ENCODE measurements at regions of chr22 and their contacts with region 1.

Region 1: GRCh38 chr22:39003165-39003638 is 10.9 kb upstream of the APOBEC3C start:
- DNase-seq: peak; percentile 90
- ATAC-seq: peak; percentile 99
- H3K4me3 ChIP-seq: no peak overlapping the region
- H3K27ac ChIP-seq: peak overlapping the region; percentile 36
- H3K4me1 ChIP-seq: peaks cover 5% of the 10 kb centered on the region
- H3K27me3 ChIP-seq: no peaks in the 10 kb centered on the region
- CTCF ChIP-seq: peak; percentile 70

Region 2: GRCh38 chr22:38766076-38766777 is 237.0 kb before region 1 on chr22:
- CTCF ChIA-PET with region 1: interaction called, 5 read pairs
- POLR2A ChIA-PET with region 1: interaction called, 7 read pairs
- intact Hi-C with region 1: loop called (anchors 5 kb)
- DNase-seq: peak; percentile 82
- ATAC-seq: peak; percentile 81
- H3K4me3 ChIP-seq: no peak overlapping the region
- H3K27ac ChIP-seq: no peak overlapping the region
- H3K4me1 ChIP-seq: peaks cover 11% of the 10 kb centered on the region
- H3K27me3 ChIP-seq: no peaks in the 10 kb centered on the region
- CTCF ChIP-seq: peak; percentile 88

Region 3: DNA sequence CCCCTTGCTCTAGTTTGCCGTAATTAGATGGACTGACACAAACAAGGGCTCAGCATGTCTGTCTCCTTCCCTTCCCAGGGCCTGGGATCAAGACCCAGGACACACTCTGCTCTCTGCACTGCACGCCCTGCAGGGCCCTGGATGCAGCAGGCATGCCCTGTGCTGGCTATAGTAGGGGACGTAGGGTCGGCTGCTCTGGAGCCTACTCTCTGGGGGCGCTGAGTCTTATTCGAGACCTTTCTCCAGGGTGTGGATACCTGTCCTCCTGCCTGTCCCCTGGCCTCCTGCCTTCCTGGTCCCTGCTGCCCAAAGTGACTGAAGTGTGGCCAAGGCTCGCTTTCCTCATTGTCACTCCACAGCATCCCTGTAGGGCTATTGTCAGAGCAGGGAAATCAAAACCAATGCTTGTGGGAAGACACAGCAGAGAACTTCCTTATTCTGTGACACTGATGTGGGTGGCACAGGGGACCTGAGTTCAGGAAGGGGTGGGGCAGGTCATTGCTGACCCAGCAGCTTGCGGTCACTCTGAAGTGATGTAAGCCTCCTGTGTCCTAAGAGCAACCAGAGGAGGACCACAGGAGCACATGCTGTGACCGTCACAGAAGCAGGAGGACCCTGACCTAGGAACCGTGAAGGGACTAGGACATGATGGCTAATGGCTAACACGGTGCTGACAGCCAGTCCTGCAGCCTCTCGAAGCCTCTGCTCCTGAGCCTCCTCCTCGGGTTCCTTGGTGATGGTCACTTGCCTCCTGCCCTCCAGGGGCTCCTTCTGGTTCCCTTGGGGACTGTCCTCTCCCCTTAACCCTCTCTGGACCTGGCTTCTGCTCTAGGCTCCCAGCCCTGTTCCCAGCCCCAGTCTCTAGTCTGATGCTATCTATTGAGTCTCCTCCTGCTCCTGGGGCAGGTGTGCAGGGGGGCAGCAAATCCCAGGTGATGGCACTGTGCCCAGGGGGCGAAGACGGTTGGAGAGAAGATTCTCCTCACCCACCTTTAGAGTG is 35.5 kb before region 1 on chr22:
- CTCF ChIA-PET with region 1: no interaction called
- POLR2A ChIA-PET with region 1: no interaction called
- intact Hi-C with region 1: no loop called
- DNase-seq: no peak
- ATAC-seq: no peak
- H3K4me3 ChIP-seq: no peak overlapping the region
- H3K27ac ChIP-seq: no peak overlapping the region
- H3K4me1 ChIP-seq: no peaks in the 10 kb centered on the region
- H3K27me3 ChIP-seq: no peaks in the 10 kb centered on the region
- CTCF ChIP-seq: no peak

Region 4: DNA sequence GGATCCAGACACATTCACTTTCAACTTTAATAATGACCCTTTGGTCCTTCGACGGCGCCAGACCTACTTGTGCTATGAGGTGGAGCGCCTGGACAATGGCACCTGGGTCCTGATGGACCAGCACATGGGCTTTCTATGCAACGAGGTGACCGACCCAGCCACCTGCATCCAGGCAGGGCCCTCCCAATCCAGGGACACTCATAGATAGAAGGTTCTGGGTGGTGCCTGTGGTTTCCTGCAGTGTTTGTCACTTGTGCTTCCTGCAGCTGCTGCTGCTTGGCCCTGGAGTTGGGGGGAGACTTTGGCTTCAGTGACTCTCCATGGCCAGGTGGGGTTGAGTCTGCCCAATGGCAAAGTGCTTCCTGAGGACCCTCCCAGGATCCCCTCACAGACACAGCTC is 13.7 kb before region 1 on chr22:
- CTCF ChIA-PET with region 1: no interaction called
- POLR2A ChIA-PET with region 1: no interaction called
- intact Hi-C with region 1: no loop called
- DNase-seq: no peak
- ATAC-seq: no peak
- H3K4me3 ChIP-seq: no peak overlapping the region
- H3K27ac ChIP-seq: no peak overlapping the region
- H3K4me1 ChIP-seq: peaks cover 8% of the 10 kb centered on the region
- H3K27me3 ChIP-seq: no peaks in the 10 kb centered on the region
- CTCF ChIP-seq: no peak

Region 5: GRCh38 chr22:39013942-39014722 is 10.9 kb after region 1 on chr22 and contains the start of gene APOBEC3C:
- CTCF ChIA-PET with region 1: no interaction called
- POLR2A ChIA-PET with region 1: no interaction called
- intact Hi-C with region 1: no loop called
- DNase-seq: peak; percentile 85
- ATAC-seq: peak; percentile 92
- H3K4me3 ChIP-seq: peak within 1 kb of the TSS; percentile 91
- H3K27ac ChIP-seq: peak within 1 kb of the TSS; percentile 72
- H3K4me1 ChIP-seq: peaks cover 7% of the 10 kb centered on the region; the same call in 1 of the 2 replicates
- H3K27me3 ChIP-seq: no peaks in the 10 kb centered on the region
- CTCF ChIP-seq: peak; percentile 18; the same call in 1 of the 2 replicates
- total RNA-seq, gene APOBEC3C: 35.5 and 37.8 TPM in 2 replicates

Region 6: DNA sequence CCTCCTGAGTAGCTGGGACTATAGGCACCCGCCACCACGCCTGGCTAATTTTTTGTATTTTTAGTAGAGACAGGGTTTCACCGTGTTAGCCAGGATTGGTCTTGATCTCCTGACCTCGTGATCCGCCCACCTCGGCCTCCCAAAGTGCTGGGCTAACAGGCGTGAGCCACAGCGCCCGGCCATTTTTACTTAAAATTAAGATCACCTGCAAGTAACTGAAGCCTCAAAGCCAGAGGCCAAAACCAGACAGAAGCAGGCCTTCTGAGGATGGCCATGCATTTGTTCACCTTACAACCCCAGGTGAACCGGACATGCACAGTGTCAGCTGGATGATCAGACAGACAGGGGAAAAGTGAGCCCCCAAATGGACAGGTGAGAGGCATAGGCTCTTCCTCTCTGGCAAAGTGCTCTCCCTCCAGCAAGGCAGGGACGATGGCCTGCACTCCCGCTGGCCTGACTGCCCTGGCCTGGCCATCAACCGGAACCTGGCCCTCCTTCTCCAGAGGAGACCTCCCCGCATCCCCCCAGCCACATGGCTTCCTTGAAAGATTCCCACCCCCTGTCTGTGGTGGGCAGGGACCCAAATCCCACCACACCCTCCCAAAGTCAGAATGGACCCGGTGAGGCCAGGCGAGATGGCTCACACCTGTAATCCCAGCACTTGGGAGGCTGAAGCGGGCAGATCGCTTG is 119.7 kb after region 1 on chr22:
- CTCF ChIA-PET with region 1: interaction called, 10 read pairs
- POLR2A ChIA-PET with region 1: no interaction called
- intact Hi-C with region 1: loop called (anchors 1 kb)
- DNase-seq: no peak
- ATAC-seq: no peak
- H3K4me3 ChIP-seq: no peak overlapping the region
- H3K27ac ChIP-seq: no peak overlapping the region
- H3K4me1 ChIP-seq: no peaks in the 10 kb centered on the region; the same call in 1 of the 2 replicates
- H3K27me3 ChIP-seq: no peaks in the 10 kb centered on the region
- CTCF ChIP-seq: no peak

Region 7: DNA sequence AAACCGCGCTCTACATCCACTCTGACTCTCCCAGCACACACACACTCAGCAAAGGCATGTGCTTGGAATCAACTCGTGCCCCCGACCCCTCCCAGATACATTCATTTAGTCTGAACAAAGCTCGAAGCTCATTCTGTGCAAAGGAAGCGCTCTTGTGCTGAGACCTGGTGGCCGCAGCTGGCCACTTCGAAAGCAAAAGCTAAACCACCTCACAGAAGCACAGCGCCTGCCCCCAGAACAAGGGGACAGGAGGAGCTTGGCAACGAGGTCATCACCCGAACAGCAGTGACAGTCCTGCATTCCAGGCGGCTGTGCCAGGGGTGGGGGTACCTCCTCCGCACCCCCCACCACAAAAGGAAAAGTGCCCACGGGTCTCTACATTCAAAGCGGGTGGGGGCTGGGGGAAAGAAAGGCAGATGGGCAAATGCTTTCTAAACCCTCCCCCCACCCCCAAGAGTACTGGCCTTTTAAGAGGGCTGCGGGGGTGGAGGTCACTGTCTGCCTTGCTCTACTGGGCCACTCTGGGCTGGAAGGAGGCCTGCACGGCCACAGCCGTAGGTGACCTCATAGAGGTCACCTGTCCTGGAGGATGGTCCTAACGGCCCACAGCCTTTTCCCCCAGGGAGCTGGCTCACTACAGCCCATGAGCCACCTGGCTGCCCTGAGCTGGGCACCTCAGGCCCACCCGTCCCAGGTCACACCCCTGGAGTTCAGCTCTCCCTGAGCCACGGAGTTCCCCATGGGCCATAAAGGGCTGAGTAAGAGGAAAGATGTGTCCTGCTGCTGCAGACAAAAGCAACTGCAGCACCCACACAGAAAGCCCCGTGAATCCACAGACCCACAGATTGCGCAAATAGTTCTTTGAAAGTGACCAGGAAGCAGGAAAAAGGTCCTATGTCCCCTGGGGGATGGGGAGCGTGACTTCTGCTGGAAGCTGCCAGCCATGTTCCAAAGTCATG is 128.0 kb after region 1 on chr22:
- CTCF ChIA-PET with region 1: interaction called, 10 read pairs
- POLR2A ChIA-PET with region 1: no interaction called
- intact Hi-C with region 1: no loop called
- DNase-seq: no peak
- ATAC-seq: no peak
- H3K4me3 ChIP-seq: no peak overlapping the region
- H3K27ac ChIP-seq: no peak overlapping the region
- H3K4me1 ChIP-seq: peaks cover 6% of the 10 kb centered on the region; the same call in 1 of the 2 replicates
- H3K27me3 ChIP-seq: no peaks in the 10 kb centered on the region
- CTCF ChIP-seq: no peak